ENCODE measurements at regions of chr1 and their contacts with region 1.

Region 1: DNA sequence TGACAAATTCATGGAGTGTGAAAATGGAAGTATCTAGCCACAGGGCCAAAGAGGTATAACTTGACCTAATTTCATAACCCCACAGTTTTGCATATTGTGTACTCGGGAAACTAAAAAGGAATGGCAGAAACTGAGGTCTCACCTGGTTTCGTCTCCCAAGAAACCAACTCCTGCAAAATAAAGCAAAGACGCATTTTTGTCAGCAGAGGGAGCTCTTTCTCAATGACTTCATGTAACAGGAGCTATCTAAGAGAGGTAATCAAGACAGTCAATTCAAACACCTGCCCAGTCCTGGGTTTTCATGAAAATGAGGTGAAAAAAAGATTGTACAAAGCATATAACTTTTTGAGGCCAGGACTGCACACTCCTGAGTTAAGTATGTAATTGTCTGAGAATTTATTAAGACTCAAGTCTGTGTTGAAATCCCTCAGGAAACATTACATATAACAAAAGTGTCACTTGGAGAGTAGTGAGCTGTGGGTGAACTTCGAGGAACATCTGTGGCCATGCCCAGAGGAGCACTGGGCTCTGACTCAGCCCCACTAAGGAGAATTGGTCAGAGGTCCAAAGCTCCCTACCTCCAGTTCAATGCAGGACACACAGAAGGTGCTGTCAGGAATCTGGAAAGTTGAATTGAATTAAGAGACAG is 17.6 kb downstream of the FCRL4 start:
- DNase-seq: peak; percentile 21 to 32 (median 26)
- H3K4me3 ChIP-seq: no peak overlapping the region
- H3K4me3 Mint-ChIP-seq: no peak overlapping the region
- H3K27ac ChIP-seq: no peak overlapping the region
- H3K27ac Mint-ChIP-seq: no peak overlapping the region
- H3K4me1 ChIP-seq: no peaks in the 10 kb centered on the region
- H3K4me1 Mint-ChIP-seq: no peaks in the 10 kb centered on the region
- H3K27me3 ChIP-seq: no peaks in the 10 kb centered on the region
- H3K27me3 Mint-ChIP-seq: peaks cover 7 to 8% of the 10 kb centered on the region in 2 donors

Region 2: GRCh38 chr1:157566484-157567300 is 13.6 kb before region 1 on chr1:
- CTCF ChIA-PET with region 1: interaction called, 10 read pairs
- POLR2A ChIA-PET with region 1: no interaction called
- intact Hi-C with region 1: no loop called
- DNase-seq: no peak
- H3K4me3 ChIP-seq: no peak overlapping the region
- H3K4me3 Mint-ChIP-seq: no peak overlapping the region
- H3K27ac ChIP-seq: no peak overlapping the region
- H3K27ac Mint-ChIP-seq: no peak overlapping the region
- H3K4me1 ChIP-seq: no peaks in the 10 kb centered on the region
- H3K4me1 Mint-ChIP-seq: no peaks in the 10 kb centered on the region
- H3K27me3 ChIP-seq: no peaks in the 10 kb centered on the region
- H3K27me3 Mint-ChIP-seq: peaks cover 14 to 22% of the 10 kb centered on the region in 2 donors

Region 3: GRCh38 chr1:157773493-157774350 is 193.4 kb after region 1 on chr1:
- CTCF ChIA-PET with region 1: interaction called, 11 read pairs
- POLR2A ChIA-PET with region 1: no interaction called
- intact Hi-C with region 1: no loop called
- DNase-seq: peak in 1 of 5 donors; percentile 0
- H3K4me3 ChIP-seq: no peak overlapping the region
- H3K4me3 Mint-ChIP-seq: peak overlapping the region in 1 of 8 donors; percentile 17
- H3K27ac ChIP-seq: no peak overlapping the region
- H3K27ac Mint-ChIP-seq: no peak overlapping the region
- H3K4me1 ChIP-seq: no peaks in the 10 kb centered on the region
- H3K4me1 Mint-ChIP-seq: peaks cover 0 to 1% (median 0%) of the 10 kb centered on the region in 4 donors
- H3K27me3 ChIP-seq: no peaks in the 10 kb centered on the region
- H3K27me3 Mint-ChIP-seq: peaks cover 5% of the 10 kb centered on the region in 2 donors

Measured in CD4-positive, alpha-beta memory T cell (primary cell).